ENCODE measurements at regions of chr16 and their contacts with region 1.

Region 1: GRCh38 chr16:82389956-82390650 is 220.1 kb upstream of the MPHOSPH6 start:
- DNase-seq: no peak
- ATAC-seq: no peak
- H3K4me3 ChIP-seq: no peak overlapping the region
- H3K27ac ChIP-seq: no peak overlapping the region
- H3K4me1 ChIP-seq: no peaks in the 10 kb centered on the region
- H3K27me3 ChIP-seq: peaks cover 0 to 1% (median 0%) of the 10 kb centered on the region in 9 donors
- CTCF ChIP-seq: no peak
- POLR2A ChIP-seq: no peak

Region 2: DNA sequence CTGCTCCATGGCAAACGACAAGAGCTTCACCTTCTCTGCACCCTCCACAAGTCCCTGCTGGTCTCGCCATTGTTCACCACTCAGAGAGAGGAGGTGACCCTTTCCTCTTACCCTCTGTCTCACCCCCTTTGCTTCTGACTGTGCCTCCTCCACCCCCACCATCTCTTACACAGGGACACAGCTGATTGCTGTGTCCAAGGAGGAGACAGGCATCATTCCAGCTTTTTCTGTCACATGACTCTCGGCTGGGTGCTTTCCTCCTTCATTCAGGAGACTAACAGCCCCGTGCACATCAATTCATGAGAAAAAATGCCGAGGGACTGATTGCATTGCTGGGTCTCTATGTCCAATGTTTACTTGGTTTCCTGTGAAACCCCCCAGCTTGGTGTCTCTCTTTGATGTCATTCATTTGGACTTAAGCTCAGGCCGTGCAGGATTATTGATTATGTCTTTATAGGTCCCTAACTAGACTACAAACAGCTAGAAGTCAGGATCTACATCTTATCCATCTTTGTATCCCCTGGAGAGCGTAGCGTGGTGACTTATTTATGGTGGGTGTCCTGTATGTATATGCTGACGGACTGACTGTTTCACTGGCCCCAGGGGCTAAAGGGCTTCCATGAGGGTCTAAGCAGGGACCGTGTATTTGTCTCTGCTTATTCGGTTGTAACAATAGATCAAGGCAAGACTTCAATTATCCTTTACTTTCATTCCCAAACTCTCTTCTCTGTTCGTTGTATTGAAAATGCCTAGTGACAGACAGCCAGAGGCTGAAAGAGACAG is 154.5 kb after region 1 on chr16:
- intact Hi-C with region 1: loop called in 1 of 10 experiments (anchors 5 kb)
- DNase-seq: no peak
- ATAC-seq: peak in 3 of 4 donors; percentile 50 to 66 (median 61)
- H3K4me3 ChIP-seq: no peak overlapping the region
- H3K27ac ChIP-seq: no peak overlapping the region
- H3K4me1 ChIP-seq: peaks cover 0 to 14% (median 0%) of the 10 kb centered on the region in 12 donors
- H3K27me3 ChIP-seq: peaks cover 0 to 4% (median 0%) of the 10 kb centered on the region in 9 donors
- CTCF ChIP-seq: no peak
- POLR2A ChIP-seq: no peak